ENCODE measurements at regions of chrX and their contacts with region 1.

Region 1: GRCh38 chrX:78555401-78555980 is 103.6 kb downstream of the RTL3 start:
- DNase-seq: peak in 4 of 5 donors; percentile 31 to 39 (median 33)
- H3K4me3 ChIP-seq: no peak overlapping the region
- H3K4me3 Mint-ChIP-seq: peak overlapping the region in 2 of 8 donors; percentile 24 to 34
- H3K27ac ChIP-seq: no peak overlapping the region
- H3K27ac Mint-ChIP-seq: peak overlapping the region in 5 of 7 donors; percentile 36 to 90 (median 75)
- H3K4me1 ChIP-seq: peaks cover 6% of the 10 kb centered on the region
- H3K4me1 Mint-ChIP-seq: peaks cover 0 to 1% (median 0%) of the 10 kb centered on the region in 4 donors
- H3K27me3 ChIP-seq: no peaks in the 10 kb centered on the region
- H3K27me3 Mint-ChIP-seq: no peaks in the 10 kb centered on the region

Region 2: GRCh38 chrX:77638397-77638796 is 917.1 kb before region 1 on chrX:
- CTCF ChIA-PET with region 1: no interaction called
- POLR2A ChIA-PET with region 1: no interaction called
- intact Hi-C with region 1: no loop called
- DNase-seq: no peak
- H3K4me3 ChIP-seq: no peak overlapping the region
- H3K4me3 Mint-ChIP-seq: no peak overlapping the region
- H3K27ac ChIP-seq: no peak overlapping the region
- H3K27ac Mint-ChIP-seq: no peak overlapping the region
- H3K4me1 ChIP-seq: no peaks in the 10 kb centered on the region
- H3K4me1 Mint-ChIP-seq: peaks cover 0 to 2% (median 0%) of the 10 kb centered on the region in 4 donors
- H3K27me3 ChIP-seq: no peaks in the 10 kb centered on the region
- H3K27me3 Mint-ChIP-seq: no peaks in the 10 kb centered on the region

Region 3: DNA sequence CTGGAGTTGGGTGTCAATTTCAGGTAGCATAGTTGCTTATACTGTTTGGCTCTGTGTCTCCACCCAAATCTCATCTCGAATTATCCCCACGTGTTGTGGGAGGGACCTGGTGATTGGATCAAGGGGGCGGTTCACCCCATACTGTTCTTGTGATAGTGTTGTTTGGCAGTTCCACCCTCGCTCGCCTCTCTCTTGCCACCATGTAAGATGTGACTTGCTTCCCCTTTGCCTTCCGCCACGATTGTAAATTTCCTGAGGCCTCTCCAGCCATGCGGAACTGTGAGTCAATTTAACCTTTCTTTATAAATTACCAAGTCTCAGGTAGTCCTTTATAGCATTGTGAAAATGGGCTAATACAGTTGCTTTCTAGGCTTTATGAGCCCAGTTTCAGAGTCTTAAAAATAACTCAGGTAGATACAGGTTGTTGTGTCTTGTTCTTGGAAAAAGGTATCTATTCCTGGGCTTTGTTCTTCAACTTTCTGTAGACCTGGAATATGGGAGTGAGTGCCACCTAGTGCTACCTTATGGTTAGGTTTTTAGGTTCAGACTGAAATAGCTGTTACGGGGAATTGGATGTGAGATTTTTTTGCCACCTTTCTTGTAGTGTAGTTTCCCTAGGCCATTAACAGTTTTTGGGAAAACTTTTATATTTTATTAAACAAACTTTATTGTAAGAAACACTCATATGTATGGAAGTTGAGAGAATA is 435.8 kb before region 1 on chrX:
- CTCF ChIA-PET with region 1: no interaction called
- POLR2A ChIA-PET with region 1: no interaction called
- intact Hi-C with region 1: loop called (anchors 10 kb)
- DNase-seq: no peak
- H3K4me3 ChIP-seq: no peak overlapping the region
- H3K4me3 Mint-ChIP-seq: peak overlapping the region in 1 of 8 donors; percentile 24
- H3K27ac ChIP-seq: no peak overlapping the region
- H3K27ac Mint-ChIP-seq: peak overlapping the region in 6 of 7 donors; percentile 24 to 72 (median 40)
- H3K4me1 ChIP-seq: peaks cover 32% of the 10 kb centered on the region
- H3K4me1 Mint-ChIP-seq: peaks cover 11 to 44% (median 29%) of the 10 kb centered on the region in 4 donors
- H3K27me3 ChIP-seq: no peaks in the 10 kb centered on the region
- H3K27me3 Mint-ChIP-seq: no peaks in the 10 kb centered on the region

Region 4: GRCh38 chrX:78283511-78283910 is 272.0 kb before region 1 on chrX:
- CTCF ChIA-PET with region 1: no interaction called
- POLR2A ChIA-PET with region 1: no interaction called
- intact Hi-C with region 1: no loop called
- DNase-seq: no peak
- H3K4me3 ChIP-seq: no peak overlapping the region
- H3K4me3 Mint-ChIP-seq: no peak overlapping the region
- H3K27ac ChIP-seq: no peak overlapping the region
- H3K27ac Mint-ChIP-seq: no peak overlapping the region
- H3K4me1 ChIP-seq: no peaks in the 10 kb centered on the region
- H3K4me1 Mint-ChIP-seq: no peaks in the 10 kb centered on the region
- H3K27me3 ChIP-seq: no peaks in the 10 kb centered on the region
- H3K27me3 Mint-ChIP-seq: no peaks in the 10 kb centered on the region

Region 5: DNA sequence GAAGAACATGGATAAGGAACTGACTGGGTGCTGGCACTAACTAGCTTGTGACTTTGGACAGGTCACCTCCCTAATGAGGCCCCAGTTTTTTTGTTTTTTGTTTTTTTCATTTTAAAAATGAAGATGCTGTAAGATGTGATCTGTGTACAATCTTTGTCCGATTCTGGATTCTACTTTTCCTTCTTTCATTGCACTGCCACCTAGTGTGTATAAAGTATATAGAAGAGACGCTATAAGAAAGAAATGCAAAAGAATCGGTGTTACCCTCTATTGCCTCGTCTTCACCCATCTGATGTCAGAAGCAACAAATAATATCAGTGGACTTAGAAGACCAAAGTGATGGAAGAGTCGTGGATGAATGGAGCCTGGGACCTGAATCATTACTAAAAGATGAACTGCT is 331.1 kb after region 1 on chrX:
- CTCF ChIA-PET with region 1: no interaction called
- POLR2A ChIA-PET with region 1: no interaction called
- intact Hi-C with region 1: loop called (anchors 2 kb)
- DNase-seq: peak in 4 of 5 donors; percentile 5 to 27 (median 10)
- H3K4me3 ChIP-seq: no peak overlapping the region
- H3K4me3 Mint-ChIP-seq: peak overlapping the region in 1 of 8 donors; percentile 50
- H3K27ac ChIP-seq: no peak overlapping the region
- H3K27ac Mint-ChIP-seq: peak overlapping the region in 2 of 7 donors; percentile 43 to 59
- H3K4me1 ChIP-seq: no peaks in the 10 kb centered on the region
- H3K4me1 Mint-ChIP-seq: peaks cover 4 to 10% (median 6%) of the 10 kb centered on the region in 4 donors
- H3K27me3 ChIP-seq: no peaks in the 10 kb centered on the region
- H3K27me3 Mint-ChIP-seq: no peaks in the 10 kb centered on the region

Region 6: DNA sequence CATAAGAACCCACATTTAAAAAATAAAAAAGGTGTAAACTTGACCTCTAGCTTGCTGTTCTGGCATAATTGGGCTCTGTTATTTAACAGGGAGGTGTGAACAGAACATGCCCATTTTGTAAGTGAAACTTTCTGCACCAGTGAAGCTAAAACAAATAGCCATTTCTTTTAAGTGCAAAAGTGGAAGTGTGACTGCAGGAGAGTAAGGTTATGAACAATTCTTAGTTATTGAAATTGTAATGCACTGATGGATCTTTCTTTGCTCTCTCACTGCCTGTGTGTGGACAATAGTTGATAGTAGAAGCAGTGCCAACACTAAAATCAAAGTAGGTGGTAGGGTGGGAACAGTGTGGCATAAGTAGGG is 402.3 kb after region 1 on chrX:
- CTCF ChIA-PET with region 1: no interaction called
- POLR2A ChIA-PET with region 1: no interaction called
- intact Hi-C with region 1: loop called (anchors 10 kb)
- DNase-seq: no peak
- H3K4me3 ChIP-seq: no peak overlapping the region
- H3K4me3 Mint-ChIP-seq: peak overlapping the region in 6 of 8 donors; percentile 2 to 75 (median 36)
- H3K27ac ChIP-seq: peak overlapping the region; percentile 35
- H3K27ac Mint-ChIP-seq: peak overlapping the region; percentile 50 to 89 (median 79)
- H3K4me1 ChIP-seq: peaks cover 80% of the 10 kb centered on the region
- H3K4me1 Mint-ChIP-seq: peaks cover 46 to 77% (median 62%) of the 10 kb centered on the region in 4 donors
- H3K27me3 ChIP-seq: no peaks in the 10 kb centered on the region
- H3K27me3 Mint-ChIP-seq: no peaks in the 10 kb centered on the region

Region 7: DNA sequence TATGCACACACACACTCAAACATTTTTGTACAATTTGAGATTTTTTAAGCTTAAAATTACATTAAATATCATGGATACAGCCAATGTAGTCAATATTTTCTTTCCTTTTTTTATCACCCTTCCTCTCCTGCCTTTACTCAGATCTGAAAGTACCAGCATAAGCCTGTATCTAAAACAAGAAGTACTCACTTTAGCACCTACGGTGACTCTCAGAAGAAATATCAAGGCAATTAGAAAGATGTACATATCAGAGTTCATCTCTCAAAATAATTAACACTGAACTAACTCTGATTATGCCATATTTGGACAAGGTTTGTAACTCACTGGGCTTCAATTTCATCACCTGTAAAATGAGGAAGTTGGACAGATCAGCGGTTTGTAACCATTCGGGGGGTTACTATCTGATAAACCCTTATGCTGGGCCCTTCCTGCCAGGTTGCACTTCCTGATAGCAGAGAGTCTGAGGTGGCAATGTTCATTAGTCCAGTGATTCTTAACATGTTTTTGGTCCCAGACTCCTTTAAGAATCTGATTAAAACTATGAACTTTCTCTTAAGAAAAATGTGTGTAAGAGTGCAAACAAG is 583.3 kb after region 1 on chrX:
- CTCF ChIA-PET with region 1: no interaction called
- POLR2A ChIA-PET with region 1: no interaction called
- intact Hi-C with region 1: loop called (anchors 5 kb)
- DNase-seq: peak in 1 of 5 donors; percentile 24
- H3K4me3 ChIP-seq: no peak overlapping the region
- H3K4me3 Mint-ChIP-seq: peak overlapping the region; percentile 24 to 73 (median 48)
- H3K27ac ChIP-seq: peak overlapping the region; percentile 49
- H3K27ac Mint-ChIP-seq: peak overlapping the region; percentile 32 to 89 (median 84)
- H3K4me1 ChIP-seq: peaks cover 52% of the 10 kb centered on the region
- H3K4me1 Mint-ChIP-seq: peaks cover 22 to 59% (median 41%) of the 10 kb centered on the region in 4 donors
- H3K27me3 ChIP-seq: no peaks in the 10 kb centered on the region
- H3K27me3 Mint-ChIP-seq: no peaks in the 10 kb centered on the region

Region 8: DNA sequence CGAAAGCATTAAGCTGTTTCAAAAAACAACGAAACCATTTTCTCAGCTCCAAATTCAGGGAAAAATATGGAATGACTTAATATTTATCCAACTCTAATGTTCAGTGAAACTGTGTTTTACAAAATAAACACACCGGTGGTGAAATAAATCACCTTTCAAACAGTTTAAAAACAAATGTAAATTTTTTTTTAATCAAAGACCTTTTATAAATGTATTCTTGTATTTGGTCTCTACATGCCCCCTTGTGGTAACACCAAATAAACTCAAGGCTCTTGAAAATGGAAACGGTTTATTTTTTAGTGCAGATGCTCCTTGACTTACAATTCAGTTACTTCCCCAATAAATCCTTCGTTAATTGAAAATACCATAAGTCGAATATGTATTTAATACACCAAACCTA is 857.5 kb after region 1 on chrX:
- CTCF ChIA-PET with region 1: interaction called, 12 read pairs
- POLR2A ChIA-PET with region 1: interaction called, 3 read pairs
- intact Hi-C with region 1: loop called (anchors 1 kb)
- DNase-seq: peak in 4 of 5 donors; percentile 48 to 54 (median 50)
- H3K4me3 ChIP-seq: peak overlapping the region; percentile 23 to 34
- H3K4me3 Mint-ChIP-seq: peak overlapping the region; percentile 71 to 84 (median 82)
- H3K27ac ChIP-seq: peak overlapping the region; percentile 56
- H3K27ac Mint-ChIP-seq: peak overlapping the region; percentile 41 to 88 (median 82)
- H3K4me1 ChIP-seq: peaks cover 7% of the 10 kb centered on the region
- H3K4me1 Mint-ChIP-seq: peaks cover 18 to 35% (median 22%) of the 10 kb centered on the region in 4 donors
- H3K27me3 ChIP-seq: no peaks in the 10 kb centered on the region
- H3K27me3 Mint-ChIP-seq: no peaks in the 10 kb centered on the region